Activated CD4-positive, alpha-beta memory T cell treated with anti-CD3 and anti-CD28 coated beads for 36 hours (primary cell): ENCODE measurements at regions of chr6 and their contacts with region 1.

Region 1: GRCh38 chr6:136745300-136745699 is 47.0 kb downstream of the MAP3K5 start:
- DNase-seq: no peak
- H3K4me3 Mint-ChIP-seq: no peak overlapping the region
- H3K27ac Mint-ChIP-seq: no peak overlapping the region
- H3K4me1 Mint-ChIP-seq: peaks cover 59% of the 10 kb centered on the region
- H3K27me3 Mint-ChIP-seq: no peaks in the 10 kb centered on the region

Region 2: GRCh38 chr6:136729832-136730231 is 15.5 kb before region 1 on chr6:
- CTCF ChIA-PET with region 1: no interaction called
- POLR2A ChIA-PET with region 1: no interaction called
- intact Hi-C with region 1: loop called (anchors 2 kb)
- DNase-seq: no peak
- H3K4me3 Mint-ChIP-seq: no peak overlapping the region
- H3K27ac Mint-ChIP-seq: no peak overlapping the region
- H3K4me1 Mint-ChIP-seq: peaks cover 36% of the 10 kb centered on the region
- H3K27me3 Mint-ChIP-seq: no peaks in the 10 kb centered on the region